HEK293T (cell line): ENCODE measurements at regions of chr18 and their contacts with region 1.

Region 1: GRCh38 chr18:11980555-11981382 is 538 bp upstream of the IMPA2 start:
- DNase-seq: peak; percentile 89

Region 2: GRCh38 chr18:11947214-11948191 is 33.3 kb before region 1 on chr18:
- CTCF ChIA-PET with region 1: no interaction called
- POLR2A ChIA-PET with region 1: interaction called, 15 read pairs
- DNase-seq: no peak